Activated CD4-positive, alpha-beta T cell treated with anti-CD3 and anti-CD28 coated beads for 36 hours (primary cell): ENCODE measurements at regions of chr2 and their contacts with region 1.

Region 1: DNA sequence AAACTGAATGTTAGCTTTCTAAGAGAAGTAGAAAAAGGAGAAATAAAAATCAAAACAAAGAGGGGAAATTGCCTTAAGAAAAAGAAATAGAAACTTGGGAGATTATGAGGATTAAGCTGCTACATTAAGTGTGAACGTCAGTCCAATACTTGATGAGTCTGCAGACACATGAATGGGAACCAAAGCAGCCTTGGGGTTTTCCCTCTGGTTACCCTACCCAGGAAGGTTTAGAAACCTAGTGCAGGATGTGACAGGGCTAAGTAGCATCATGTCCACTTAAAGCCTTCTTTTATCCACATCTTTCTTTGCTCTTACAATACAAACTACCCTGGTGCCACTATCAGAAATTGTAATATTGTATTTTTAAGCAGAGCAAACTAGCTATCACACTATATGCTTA is 22.3 kb downstream of the SLC35F5 start:
- DNase-seq: peak; percentile 29
- ATAC-seq: peak; percentile 93
- H3K4me3 Mint-ChIP-seq: no peak overlapping the region
- H3K27ac Mint-ChIP-seq: no peak overlapping the region
- H3K4me1 Mint-ChIP-seq: peaks cover 9% of the 10 kb centered on the region
- H3K27me3 Mint-ChIP-seq: no peaks in the 10 kb centered on the region

Region 2: GRCh38 chr2:113672326-113672932 is 61.8 kb before region 1 on chr2:
- CTCF ChIA-PET with region 1: no interaction called
- POLR2A ChIA-PET with region 1: no interaction called
- intact Hi-C with region 1: no loop called
- DNase-seq: no peak
- ATAC-seq: no peak
- H3K4me3 Mint-ChIP-seq: no peak overlapping the region
- H3K27ac Mint-ChIP-seq: no peak overlapping the region
- H3K4me1 Mint-ChIP-seq: no peaks in the 10 kb centered on the region
- H3K27me3 Mint-ChIP-seq: no peaks in the 10 kb centered on the region

Region 3: GRCh38 chr2:113720167-113720566 is 14.0 kb before region 1 on chr2:
- CTCF ChIA-PET with region 1: interaction called, 13 read pairs
- POLR2A ChIA-PET with region 1: no interaction called
- intact Hi-C with region 1: no loop called
- DNase-seq: no peak
- ATAC-seq: no peak
- H3K4me3 Mint-ChIP-seq: no peak overlapping the region
- H3K27ac Mint-ChIP-seq: no peak overlapping the region
- H3K4me1 Mint-ChIP-seq: no peaks in the 10 kb centered on the region
- H3K27me3 Mint-ChIP-seq: no peaks in the 10 kb centered on the region